ENCODE measurements at regions of chr4 and their contacts with region 1.

Region 1: GRCh38 chr4:663438-664428 is 10.3 kb downstream of the ATP5ME start:
- DNase-seq: peak; percentile 68 to 91 (median 82)
- ATAC-seq: peak; percentile 89 to 90
- H3K4me3 Mint-ChIP-seq: peak overlapping the region; percentile 80 to 93 (median 86)
- H3K27ac Mint-ChIP-seq: peak overlapping the region; percentile 68 to 95 (median 91)
- H3K4me1 Mint-ChIP-seq: peaks cover 11 to 34% (median 19%) of the 10 kb centered on the region in 4 donors
- H3K27me3 Mint-ChIP-seq: no peaks in the 10 kb centered on the region

Region 2: GRCh38 chr4:498328-498904 is 165.3 kb before region 1 on chr4:
- POLR2A ChIA-PET with region 1: interaction called, 12 read pairs
- DNase-seq: no peak
- ATAC-seq: peak; percentile 32 to 62
- H3K4me3 Mint-ChIP-seq: peak overlapping the region; percentile 86 to 98 (median 94)
- H3K27ac Mint-ChIP-seq: peak overlapping the region; percentile 93 to 98 (median 96)
- H3K4me1 Mint-ChIP-seq: peaks cover 18 to 55% (median 47%) of the 10 kb centered on the region in 4 donors
- H3K27me3 Mint-ChIP-seq: no peaks in the 10 kb centered on the region

Region 3: GRCh38 chr4:674172-675035 is 10.7 kb after region 1 on chr4 and contains the starts of genes ATP5ME and MYL5:
- POLR2A ChIA-PET with region 1: interaction called, 58 read pairs
- DNase-seq: peak; percentile 96 to 99 (median 98)
- ATAC-seq: peak; percentile 93 to 95
- H3K4me3 Mint-ChIP-seq: peak within 1 kb of the TSS; percentile 81 to 92 (median 89)
- H3K27ac Mint-ChIP-seq: peak within 1 kb of the TSS; percentile 82 to 94 (median 88)
- H3K4me1 Mint-ChIP-seq: peaks cover 4 to 25% (median 15%) of the 10 kb centered on the region in 4 donors
- H3K27me3 Mint-ChIP-seq: no peaks in the 10 kb centered on the region
- polyA plus RNA-seq, gene ATP5ME: 420 to 468 (median 462) TPM
- polyA plus RNA-seq, gene MYL5: 3.1 to 13.9 (median 7.5) TPM

Measured in naive thymus-derived CD8-positive, alpha-beta T cell (primary cell).